ENCODE measurements at regions of chr1 and their contacts with region 1.

Region 1: DNA sequence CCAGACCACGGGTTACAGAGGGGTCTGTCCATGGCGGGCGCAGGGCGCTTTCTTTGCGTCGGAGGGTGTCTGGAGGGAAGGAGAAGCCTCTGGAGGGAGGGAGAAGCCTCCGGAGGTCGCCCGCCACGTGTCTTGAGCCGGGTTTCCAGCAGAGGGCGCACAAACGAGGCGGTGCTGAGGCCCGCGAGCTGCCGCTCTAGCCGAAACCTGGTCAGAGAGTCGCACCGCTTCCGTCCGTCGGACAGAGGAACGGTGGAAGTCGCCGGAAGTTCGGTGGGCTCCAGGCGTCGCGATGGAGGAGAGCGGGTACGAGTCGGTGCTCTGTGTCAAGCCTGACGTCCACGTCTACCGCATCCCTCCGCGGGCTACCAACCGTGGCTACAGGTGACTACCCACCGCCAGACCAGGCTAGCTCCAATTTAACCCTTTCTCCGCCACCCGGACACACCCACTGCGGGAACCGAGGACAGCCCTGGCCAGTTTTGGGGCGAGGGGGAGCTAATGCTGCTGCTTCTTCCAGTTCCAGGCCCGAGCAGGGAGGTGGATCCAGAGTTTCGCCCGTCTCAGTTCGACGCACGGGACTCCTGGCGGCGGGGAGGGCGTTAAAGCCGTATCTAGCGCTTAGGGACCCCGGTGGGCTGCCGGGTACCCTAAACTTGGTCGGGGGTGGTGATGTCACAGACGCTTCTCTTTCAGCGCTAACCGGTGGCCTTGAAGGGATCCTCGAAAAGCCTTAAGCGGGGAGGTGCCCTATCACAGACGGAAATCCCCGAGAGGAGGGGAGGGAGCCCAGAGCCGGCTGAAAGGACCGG is at the start of gene NECAP2:
- DNase-seq: peak; percentile 94 to 97
- ATAC-seq: peak; percentile 96 to 99 (median 98)
- H3K4me3 ChIP-seq: peak within 1 kb of the TSS; percentile 95
- H3K27ac ChIP-seq: peak within 1 kb of the TSS; percentile 87
- H3K4me1 ChIP-seq: peaks cover 25% of the 10 kb centered on the region
- H3K27me3 ChIP-seq: no peaks in the 10 kb centered on the region
- CTCF ChIP-seq: peak; percentile 83
- total RNA-seq, gene NECAP2: 5.7 to 10.6 (median 9.1) TPM

Region 2: GRCh38 chr1:16396591-16396990 is 44.1 kb before region 1 on chr1:
- intact Hi-C with region 1: no loop called
- DNase-seq: peak; percentile 64 to 68
- ATAC-seq: peak; percentile 62 to 87 (median 71)
- H3K4me3 ChIP-seq: no peak overlapping the region
- H3K27ac ChIP-seq: peak overlapping the region; percentile 77
- H3K4me1 ChIP-seq: peaks cover 40% of the 10 kb centered on the region
- H3K27me3 ChIP-seq: no peaks in the 10 kb centered on the region
- CTCF ChIP-seq: no peak

Region 3: DNA sequence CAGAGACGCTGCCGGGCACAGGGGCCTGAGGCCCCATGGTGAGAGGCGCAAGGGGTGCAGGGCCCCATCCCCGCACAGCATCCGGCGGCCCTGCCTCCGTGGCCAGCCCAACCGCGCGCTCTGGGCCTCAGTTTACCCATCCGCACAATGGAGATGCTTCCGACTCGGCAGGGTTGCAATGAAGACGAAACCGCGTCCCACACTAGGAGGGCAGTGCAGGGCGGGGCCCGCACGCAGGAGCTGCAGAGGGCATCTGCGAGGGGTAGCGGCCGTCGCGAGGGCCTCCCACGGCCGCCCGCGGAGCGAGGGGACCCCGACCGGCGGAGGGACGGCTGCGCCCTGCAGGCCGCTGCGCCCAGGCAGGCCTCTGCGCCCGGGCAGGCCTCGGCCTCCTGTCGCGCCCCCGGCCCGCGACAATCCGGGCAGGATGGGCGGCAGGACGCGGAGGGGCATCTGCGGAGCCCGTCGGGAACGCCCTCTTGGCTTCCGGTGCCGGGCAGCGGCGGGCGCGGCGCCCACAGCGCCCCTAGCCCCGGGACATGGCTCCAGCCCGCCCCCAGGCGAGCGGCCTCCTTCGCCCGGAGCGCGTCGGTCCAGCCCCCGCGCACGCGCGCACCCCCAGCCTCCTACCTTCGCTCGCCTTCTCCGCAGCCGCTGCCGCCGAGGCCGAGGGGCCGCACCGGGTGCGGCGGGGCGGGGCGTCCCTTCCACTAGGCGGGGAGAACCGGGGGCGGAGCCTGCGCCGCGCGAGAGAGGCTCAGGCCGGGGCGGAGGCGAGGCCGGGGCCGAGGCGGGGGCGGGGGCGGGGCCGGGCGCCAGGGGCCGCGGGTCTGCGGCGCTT is 58.1 kb after region 1 on chr1:
- intact Hi-C with region 1: loop called in 1 of 2 experiments (anchors 5 kb)
- DNase-seq: peak; percentile 91 to 92
- ATAC-seq: peak; percentile 91 to 92 (median 92)
- H3K4me3 ChIP-seq: peak overlapping the region; percentile 80
- H3K27ac ChIP-seq: peak overlapping the region; percentile 77
- H3K4me1 ChIP-seq: no peaks in the 10 kb centered on the region
- H3K27me3 ChIP-seq: no peaks in the 10 kb centered on the region
- CTCF ChIP-seq: no peak